AG04450 (cell line): ENCODE measurements at regions of chr11 and their contacts with region 1.

Region 1: DNA sequence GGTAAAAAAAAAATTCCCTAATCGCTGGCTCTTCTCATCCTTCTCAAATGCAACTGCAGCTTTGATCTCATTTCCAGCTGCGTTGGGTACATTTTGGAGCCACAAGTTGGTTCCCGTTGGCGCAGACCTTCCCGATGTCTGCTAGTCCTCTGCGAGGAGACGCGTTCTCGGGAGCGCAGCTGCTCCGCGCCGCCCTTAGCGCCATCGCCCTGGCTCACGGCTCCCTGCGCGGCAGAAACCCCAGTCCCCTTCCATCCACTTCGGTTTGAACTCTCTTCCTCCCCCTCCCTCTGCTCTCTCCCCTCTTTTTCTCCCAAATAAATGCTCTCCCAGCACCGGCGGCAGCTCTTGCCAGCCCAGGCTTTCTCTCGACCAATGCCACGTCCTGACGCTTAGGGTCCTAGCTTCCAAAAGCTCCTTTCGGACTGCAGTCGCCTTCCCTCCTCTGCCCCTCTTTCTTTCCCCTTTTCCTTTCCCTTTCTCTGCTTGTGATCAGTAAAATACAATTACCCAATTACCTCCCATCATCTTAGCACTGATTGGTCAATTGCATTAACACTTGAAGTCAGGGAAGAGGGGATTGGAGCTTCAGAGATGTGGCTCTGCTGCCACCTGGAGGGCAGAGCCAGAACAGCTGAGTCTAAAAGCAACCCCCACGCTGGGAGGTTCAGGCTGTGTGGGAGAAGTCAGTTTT is 1165.7 kb downstream of the LRRC4C start:
- DNase-seq: peak; percentile 69
- H3K4me3 ChIP-seq: peak overlapping the region; percentile 80
- H3K27ac ChIP-seq: peak overlapping the region; percentile 52
- H3K27me3 ChIP-seq: peaks cover 6% of the 10 kb centered on the region
- CTCF ChIP-seq: peak; percentile 98

Region 2: DNA sequence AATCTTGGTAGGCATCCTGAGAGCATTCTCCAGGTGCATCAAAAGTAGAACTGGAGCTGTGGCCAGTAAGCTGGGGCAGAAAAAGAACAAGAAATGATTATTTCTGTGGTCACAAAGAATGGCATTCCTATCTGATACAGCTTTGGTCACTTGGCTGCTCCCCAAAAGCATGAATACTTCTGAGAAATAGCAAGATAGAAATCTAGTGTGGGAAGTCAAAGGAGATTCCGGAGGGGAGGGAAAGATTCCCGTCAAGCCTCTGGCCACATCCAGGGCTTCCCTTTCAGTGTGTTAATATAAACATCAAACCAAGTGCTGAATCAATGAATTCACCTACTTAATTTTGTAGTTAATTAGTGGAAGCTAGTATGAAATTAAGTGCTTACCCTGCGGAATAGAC is 19.8 kb before region 1 on chr11:
- CTCF ChIA-PET with region 1: interaction called, 30 read pairs
- POLR2A ChIA-PET with region 1: no interaction called
- DNase-seq: no peak
- H3K4me3 ChIP-seq: no peak overlapping the region
- H3K27ac ChIP-seq: no peak overlapping the region
- H3K27me3 ChIP-seq: peaks cover 3% of the 10 kb centered on the region
- CTCF ChIP-seq: no peak

Region 3: DNA sequence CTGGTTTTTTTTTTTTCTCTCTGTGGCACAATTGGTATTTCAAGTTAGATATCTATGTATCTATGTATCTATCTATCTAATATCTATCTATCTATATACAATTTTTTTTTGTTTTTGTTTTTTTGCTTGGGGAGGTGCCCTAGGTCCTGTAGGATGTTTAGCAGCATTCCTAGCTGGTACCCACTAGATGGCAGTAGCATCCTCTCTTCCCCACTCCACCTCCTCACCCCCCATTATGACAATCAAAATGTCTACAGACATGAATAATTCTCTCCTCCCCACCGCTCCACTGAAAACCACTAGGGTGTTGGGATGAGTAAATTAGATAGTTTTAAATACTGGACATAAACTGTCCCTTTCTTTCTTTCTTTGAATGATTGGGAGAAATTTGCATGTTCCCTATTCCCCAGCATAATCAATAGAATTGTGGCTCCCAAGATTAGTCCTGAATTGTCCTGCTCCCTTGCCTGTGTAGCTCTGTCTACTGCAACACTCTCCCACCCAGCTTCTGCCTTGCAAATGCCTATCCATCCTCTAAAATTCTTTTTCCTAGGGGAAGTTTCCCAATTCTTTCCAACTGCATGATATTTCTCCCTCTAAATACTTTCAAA is 13.2 kb after region 1 on chr11:
- CTCF ChIA-PET with region 1: interaction called, 34 read pairs
- POLR2A ChIA-PET with region 1: no interaction called
- DNase-seq: no peak
- H3K4me3 ChIP-seq: no peak overlapping the region
- H3K27ac ChIP-seq: no peak overlapping the region
- H3K27me3 ChIP-seq: no peaks in the 10 kb centered on the region
- CTCF ChIP-seq: peak; percentile 92

Region 4: GRCh38 chr11:40323241-40323640 is 29.4 kb after region 1 on chr11:
- CTCF ChIA-PET with region 1: interaction called, 35 read pairs
- POLR2A ChIA-PET with region 1: no interaction called
- DNase-seq: no peak
- H3K4me3 ChIP-seq: no peak overlapping the region
- H3K27ac ChIP-seq: no peak overlapping the region
- H3K27me3 ChIP-seq: no peaks in the 10 kb centered on the region
- CTCF ChIP-seq: no peak

Region 5: GRCh38 chr11:40328890-40329614 is 35.2 kb after region 1 on chr11:
- CTCF ChIA-PET with region 1: interaction called, 35 read pairs
- POLR2A ChIA-PET with region 1: no interaction called
- DNase-seq: peak; percentile 100
- H3K4me3 ChIP-seq: peak overlapping the region; percentile 11; the same call in 1 of the 2 replicates
- H3K27ac ChIP-seq: peak overlapping the region; percentile 77
- H3K27me3 ChIP-seq: no peaks in the 10 kb centered on the region
- CTCF ChIP-seq: no peak